Panc1 (cell line): ENCODE measurements at regions of chr1 and their contacts with region 1.

Region 1: DNA sequence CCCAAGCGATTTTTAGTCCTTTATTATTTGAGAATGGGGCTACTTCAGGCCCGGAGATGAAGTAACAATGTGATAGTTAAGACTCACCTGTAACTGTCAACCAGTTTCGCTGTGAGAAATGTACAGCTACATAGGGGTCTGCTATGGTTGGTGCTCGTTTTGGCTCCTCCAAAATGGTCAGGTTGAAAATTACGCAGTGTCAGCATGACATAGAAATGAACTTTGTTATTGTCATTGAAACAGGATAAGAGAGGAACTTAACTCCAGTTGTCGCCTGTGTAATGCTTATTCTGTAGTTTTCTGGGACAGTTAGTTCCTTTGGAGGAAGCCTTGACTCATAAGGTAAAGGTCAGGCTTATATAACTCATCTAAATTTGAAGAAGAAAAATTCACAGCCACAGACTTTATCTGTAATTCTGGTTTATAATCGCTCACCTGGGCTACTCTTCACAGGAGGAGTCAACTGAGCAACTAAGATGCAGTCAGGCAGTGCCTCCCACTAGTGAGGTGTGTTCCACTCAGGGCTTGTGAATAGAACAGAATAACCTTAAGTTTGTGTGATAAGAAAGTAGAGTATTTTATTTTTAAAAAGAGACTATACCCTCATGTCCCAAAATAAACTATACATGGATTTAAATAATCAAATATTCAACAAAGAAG is 130.9 kb downstream of the CD247 start:
- DNase-seq: no peak
- ATAC-seq: no peak
- H3K4me3 ChIP-seq: no peak overlapping the region
- H3K27ac ChIP-seq: no peak overlapping the region
- H3K4me1 ChIP-seq: no peaks in the 10 kb centered on the region
- H3K27me3 ChIP-seq: no peaks in the 10 kb centered on the region
- CTCF ChIP-seq: no peak

Region 2: DNA sequence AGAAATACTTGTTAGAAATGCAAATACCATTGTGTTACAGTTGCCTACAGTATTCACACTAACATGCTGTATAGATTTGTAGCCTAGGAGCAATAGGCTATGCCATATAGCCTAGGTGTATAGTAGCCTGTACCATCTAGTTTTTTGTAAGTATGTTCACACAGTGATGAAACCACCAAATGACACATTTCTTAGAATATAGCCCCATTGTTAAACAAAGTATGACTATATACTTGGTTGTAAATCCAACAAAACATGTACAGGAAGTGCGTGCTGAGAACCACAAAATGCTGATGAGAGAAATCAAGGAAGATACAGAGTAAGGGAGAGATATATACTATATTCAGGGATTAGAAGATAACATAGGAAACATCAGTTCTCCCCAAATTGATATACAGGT is 74.5 kb before region 1 on chr1:
- CTCF ChIA-PET with region 1: no interaction called
- POLR2A ChIA-PET with region 1: no interaction called
- in situ Hi-C with region 1: no loop called
- intact Hi-C with region 1: no loop called
- DNase-seq: no peak
- ATAC-seq: no peak
- H3K4me3 ChIP-seq: no peak overlapping the region
- H3K27ac ChIP-seq: no peak overlapping the region
- H3K4me1 ChIP-seq: no peaks in the 10 kb centered on the region
- H3K27me3 ChIP-seq: no peaks in the 10 kb centered on the region
- CTCF ChIP-seq: no peak

Region 3: DNA sequence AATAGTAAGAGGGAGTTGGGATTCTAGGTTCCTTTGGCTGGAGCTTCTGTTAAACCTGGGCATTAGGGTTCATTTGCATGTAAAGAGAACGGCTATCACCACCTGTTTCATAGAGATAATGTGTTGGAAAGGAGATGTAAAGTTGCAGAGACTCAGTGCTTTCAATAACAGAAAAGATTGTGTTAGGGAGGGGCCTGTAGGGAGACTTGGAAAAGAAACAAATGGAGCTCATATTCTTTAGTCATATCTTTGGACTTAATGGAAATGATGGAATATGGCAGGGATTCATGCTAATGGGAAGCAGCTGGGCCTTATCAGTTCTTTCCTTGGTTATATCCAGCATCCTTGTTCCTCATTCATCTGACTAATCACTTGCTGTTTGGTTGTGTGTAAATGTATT is 14.0 kb before region 1 on chr1:
- CTCF ChIA-PET with region 1: no interaction called
- POLR2A ChIA-PET with region 1: interaction called, 14 read pairs
- in situ Hi-C with region 1: no loop called
- intact Hi-C with region 1: no loop called
- DNase-seq: no peak
- ATAC-seq: no peak
- H3K4me3 ChIP-seq: no peak overlapping the region
- H3K27ac ChIP-seq: no peak overlapping the region
- H3K4me1 ChIP-seq: no peaks in the 10 kb centered on the region
- H3K27me3 ChIP-seq: no peaks in the 10 kb centered on the region
- CTCF ChIP-seq: no peak

Region 4: DNA sequence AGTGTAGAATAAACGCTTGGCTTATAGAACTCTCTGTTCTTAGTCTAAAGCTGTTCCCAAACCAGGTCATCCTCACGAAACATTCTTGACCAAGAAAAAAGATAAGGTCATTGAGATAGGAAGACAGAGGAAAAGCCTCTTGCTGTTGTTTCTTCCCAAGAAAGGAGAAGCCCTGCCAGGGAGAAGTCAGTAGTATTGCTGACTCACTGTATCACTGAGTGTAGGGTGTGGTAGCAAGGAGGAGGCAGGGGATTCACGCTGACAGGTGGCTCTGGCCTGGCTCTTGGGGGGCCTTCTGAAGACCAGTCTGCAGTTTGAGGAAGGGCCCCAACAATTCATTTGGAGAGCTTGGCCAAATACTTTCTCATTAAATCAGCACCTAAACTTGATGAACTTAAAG is 33.1 kb after region 1 on chr1:
- CTCF ChIA-PET with region 1: no interaction called
- POLR2A ChIA-PET with region 1: no interaction called
- in situ Hi-C with region 1: no loop called
- intact Hi-C with region 1: no loop called
- DNase-seq: no peak
- ATAC-seq: no peak
- H3K4me3 ChIP-seq: no peak overlapping the region
- H3K27ac ChIP-seq: no peak overlapping the region
- H3K4me1 ChIP-seq: no peaks in the 10 kb centered on the region
- H3K27me3 ChIP-seq: no peaks in the 10 kb centered on the region
- CTCF ChIP-seq: no peak